Kidney (tissue), 22 donors: ENCODE measurements at regions of chr6 and their contacts with region 1.

Region 1: GRCh38 chr6:108541838-108542759 is 18.6 kb upstream of the FOXO3 start:
- DNase-seq: peak; percentile 69 to 91 (median 82)
- H3K4me3 ChIP-seq: no peak overlapping the region
- H3K27ac ChIP-seq: no peak overlapping the region
- H3K4me1 ChIP-seq: peaks cover 0 to 8% (median 6%) of the 10 kb centered on the region in 3 donors
- H3K27me3 ChIP-seq: no peaks in the 10 kb centered on the region
- CTCF ChIP-seq: peak; percentile 96

Region 2: GRCh38 chr6:108250240-108250866 is 291.7 kb before region 1 on chr6:
- intact Hi-C with region 1: no loop called
- DNase-seq: no peak
- H3K4me3 ChIP-seq: no peak overlapping the region
- H3K27ac ChIP-seq: no peak overlapping the region
- H3K4me1 ChIP-seq: peaks cover 0 to 7% (median 0%) of the 10 kb centered on the region in 3 donors
- H3K27me3 ChIP-seq: no peaks in the 10 kb centered on the region
- CTCF ChIP-seq: no peak

Region 3: GRCh38 chr6:109073344-109074132 is 531.4 kb after region 1 on chr6:
- intact Hi-C with region 1: loop called (anchors 5 kb)
- DNase-seq: peak in 3 of 5 donors; percentile 47 to 90 (median 86)
- H3K4me3 ChIP-seq: no peak overlapping the region
- H3K27ac ChIP-seq: no peak overlapping the region
- H3K4me1 ChIP-seq: peaks cover 0 to 6% (median 0%) of the 10 kb centered on the region in 3 donors
- H3K27me3 ChIP-seq: no peaks in the 10 kb centered on the region
- CTCF ChIP-seq: peak; percentile 50